Lower leg skin (tissue), 4 donors: ENCODE measurements at regions of chr17 and their contacts with region 1.

Region 1: DNA sequence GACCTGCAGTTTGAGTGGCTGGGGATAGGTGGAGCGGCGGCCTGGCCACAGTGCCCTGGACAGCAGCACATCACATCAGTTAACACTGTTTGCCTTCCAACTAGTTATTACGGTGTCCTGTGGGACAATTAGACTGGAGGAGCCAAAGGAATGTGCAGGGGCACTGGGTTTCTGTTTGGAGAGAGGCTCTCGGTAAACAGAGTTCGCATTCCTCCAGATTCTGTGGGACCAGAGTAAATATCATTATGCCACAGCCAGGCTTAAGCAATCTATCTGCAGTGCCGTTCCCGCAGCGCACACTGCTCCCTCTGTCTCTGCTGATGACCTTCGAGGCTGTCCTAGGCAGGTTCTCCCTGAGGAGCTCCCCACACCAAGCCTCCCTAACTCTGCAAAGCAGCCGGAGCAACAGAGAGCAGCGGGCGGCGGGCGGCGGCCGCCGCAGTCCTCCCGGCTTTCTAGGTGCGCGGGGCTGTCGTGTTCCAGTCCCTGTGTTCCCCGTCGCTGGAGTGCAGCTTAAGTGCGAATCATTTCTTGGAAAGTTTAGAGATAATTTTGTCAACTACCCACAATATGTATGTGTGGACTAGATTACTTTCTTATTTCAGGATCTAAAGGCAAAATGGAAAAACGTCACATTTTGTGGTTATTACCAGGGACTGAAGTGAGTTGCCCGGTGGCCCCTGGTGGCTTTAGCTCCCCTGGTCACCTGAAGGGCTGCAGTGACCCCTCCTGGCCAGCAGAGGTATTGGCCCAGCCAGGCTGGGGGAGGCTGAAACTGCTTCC is 43.2 kb downstream of the PGS1 start:
- DNase-seq: peak; percentile 55 to 94
- H3K4me3 ChIP-seq: no peak overlapping the region
- CTCF ChIP-seq: peak in 1 of 3 donors; percentile 79
- POLR2A ChIP-seq: no peak

Region 2: DNA sequence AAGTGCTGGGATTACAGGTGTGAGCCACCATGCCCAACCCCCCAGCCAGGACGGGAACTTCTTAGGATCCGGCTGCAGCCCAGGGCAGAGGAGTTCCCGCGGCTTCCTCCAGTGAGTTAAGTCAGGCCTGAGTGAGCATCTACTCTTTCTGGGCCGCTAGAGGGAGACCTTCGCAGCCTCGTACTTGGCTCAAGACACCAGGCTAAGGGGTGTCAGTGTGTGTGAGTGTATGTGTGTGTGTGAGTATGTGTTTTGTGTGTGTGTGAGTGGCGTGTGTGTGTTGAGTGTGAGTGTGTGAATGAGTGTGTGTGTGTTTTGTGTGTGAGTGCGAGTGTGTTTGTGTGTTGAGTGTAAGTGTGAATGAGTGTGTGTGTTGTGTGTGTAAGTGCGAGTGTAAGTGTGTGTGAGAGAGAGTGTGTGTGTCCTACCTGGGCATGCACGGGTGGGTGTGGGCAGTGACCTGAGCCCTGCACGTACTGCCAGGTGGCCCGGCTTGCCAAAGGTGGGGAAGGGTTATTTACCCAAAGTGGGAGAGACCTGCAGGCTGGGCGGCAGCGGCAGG is 131.8 kb before region 1 on chr17:
- intact Hi-C with region 1: loop called (anchors 5 kb)
- DNase-seq: peak; percentile 68 to 94
- H3K4me3 ChIP-seq: no peak overlapping the region
- CTCF ChIP-seq: peak in 1 of 3 donors; percentile 93
- POLR2A ChIP-seq: no peak